ENCODE measurements at regions of chr2 and their contacts with region 1.

Region 1: GRCh38 chr2:85354286-85355072 is at the starts of genes ELMOD3 and RETSAT:
- DNase-seq: peak; percentile 97
- ATAC-seq: peak; percentile 98
- H3K4me3 ChIP-seq: peak within 1 kb of the TSS; percentile 87
- H3K27ac ChIP-seq: peak within 1 kb of the TSS; percentile 74
- H3K4me1 ChIP-seq: peaks cover 4% of the 10 kb centered on the region
- H3K27me3 ChIP-seq: no peaks in the 10 kb centered on the region
- CTCF ChIP-seq: no peak
- EP300 ChIP-seq: no peak; a peak in 1 of 4 replicates
- POLR2A ChIP-seq: peak; percentile 99
- RAD21 ChIP-seq: no peak
- polyA plus RNA-seq, gene ELMOD3: 1.2 to 2.7 TPM
- polyA plus RNA-seq, gene RETSAT: 3.3 to 4.4 TPM

Region 2: GRCh38 chr2:85248773-85249509 is 105.5 kb before region 1 on chr2:
- CTCF ChIA-PET with region 1: no interaction called
- POLR2A ChIA-PET with region 1: no interaction called
- RAD21 ChIA-PET with region 1: no interaction called
- SMC1A ChIA-PET with region 1: no interaction called
- in situ Hi-C with region 1: no loop called
- intact Hi-C with region 1: no loop called
- DNase-seq: no peak
- ATAC-seq: no peak
- H3K4me3 ChIP-seq: no peak overlapping the region
- H3K27ac ChIP-seq: no peak overlapping the region
- H3K4me1 ChIP-seq: no peaks in the 10 kb centered on the region
- H3K27me3 ChIP-seq: peaks cover 2% of the 10 kb centered on the region in 2 experiments
- CTCF ChIP-seq: no peak
- EP300 ChIP-seq: no peak
- POLR2A ChIP-seq: no peak
- RAD21 ChIP-seq: no peak

Region 3: GRCh38 chr2:85273738-85274731 is 80.4 kb before region 1 on chr2:
- CTCF ChIA-PET with region 1: no interaction called
- POLR2A ChIA-PET with region 1: no interaction called
- RAD21 ChIA-PET with region 1: no interaction called
- SMC1A ChIA-PET with region 1: no interaction called
- in situ Hi-C with region 1: no loop called
- intact Hi-C with region 1: no loop called
- DNase-seq: no peak
- ATAC-seq: no peak; the same call in 2 of the 3 replicates
- H3K4me3 ChIP-seq: no peak overlapping the region
- H3K27ac ChIP-seq: no peak overlapping the region
- H3K4me1 ChIP-seq: no peaks in the 10 kb centered on the region
- H3K27me3 ChIP-seq: peaks cover 7 to 8% of the 10 kb centered on the region in 2 experiments; a peak in 3 of 4 replicates
- CTCF ChIP-seq: no peak
- EP300 ChIP-seq: no peak
- POLR2A ChIP-seq: no peak
- RAD21 ChIP-seq: no peak

Region 4: GRCh38 chr2:85288244-85288725 is 66.2 kb before region 1 on chr2:
- CTCF ChIA-PET with region 1: no interaction called
- POLR2A ChIA-PET with region 1: no interaction called
- RAD21 ChIA-PET with region 1: no interaction called
- SMC1A ChIA-PET with region 1: no interaction called
- in situ Hi-C with region 1: no loop called
- intact Hi-C with region 1: no loop called
- DNase-seq: no peak
- ATAC-seq: no peak
- H3K4me3 ChIP-seq: no peak overlapping the region
- H3K27ac ChIP-seq: no peak overlapping the region
- H3K4me1 ChIP-seq: no peaks in the 10 kb centered on the region; the same call in 1 of the 2 replicates
- H3K27me3 ChIP-seq: no peaks in the 10 kb centered on the region; a peak in 1 of 4 replicates
- CTCF ChIP-seq: no peak
- EP300 ChIP-seq: no peak
- POLR2A ChIP-seq: no peak
- RAD21 ChIP-seq: no peak

Region 5: GRCh38 chr2:85327822-85328617 is 26.5 kb before region 1 on chr2 and contains the start of gene TGOLN2:
- CTCF ChIA-PET with region 1: interaction called, 5 read pairs
- POLR2A ChIA-PET with region 1: interaction called, 20 read pairs
- RAD21 ChIA-PET with region 1: interaction called, 4 read pairs
- SMC1A ChIA-PET with region 1: interaction called, 5 read pairs
- in situ Hi-C with region 1: no loop called
- intact Hi-C with region 1: loop called (anchors 1 kb)
- DNase-seq: peak; percentile 73
- ATAC-seq: peak; percentile 90
- H3K4me3 ChIP-seq: peak within 1 kb of the TSS; percentile 98
- H3K27ac ChIP-seq: peak within 1 kb of the TSS; percentile 99
- H3K4me1 ChIP-seq: peaks cover 20% of the 10 kb centered on the region
- H3K27me3 ChIP-seq: no peaks in the 10 kb centered on the region
- CTCF ChIP-seq: no peak
- EP300 ChIP-seq: peak in 1 of 2 experiments; percentile 13; a peak in 1 of 4 replicates
- POLR2A ChIP-seq: peak; percentile 98
- RAD21 ChIP-seq: no peak
- polyA plus RNA-seq, gene TGOLN2: 13.8 to 21.6 TPM